GM13976 (cell line): ENCODE measurements at regions of chr22 and their contacts with region 1.

Region 1: DNA sequence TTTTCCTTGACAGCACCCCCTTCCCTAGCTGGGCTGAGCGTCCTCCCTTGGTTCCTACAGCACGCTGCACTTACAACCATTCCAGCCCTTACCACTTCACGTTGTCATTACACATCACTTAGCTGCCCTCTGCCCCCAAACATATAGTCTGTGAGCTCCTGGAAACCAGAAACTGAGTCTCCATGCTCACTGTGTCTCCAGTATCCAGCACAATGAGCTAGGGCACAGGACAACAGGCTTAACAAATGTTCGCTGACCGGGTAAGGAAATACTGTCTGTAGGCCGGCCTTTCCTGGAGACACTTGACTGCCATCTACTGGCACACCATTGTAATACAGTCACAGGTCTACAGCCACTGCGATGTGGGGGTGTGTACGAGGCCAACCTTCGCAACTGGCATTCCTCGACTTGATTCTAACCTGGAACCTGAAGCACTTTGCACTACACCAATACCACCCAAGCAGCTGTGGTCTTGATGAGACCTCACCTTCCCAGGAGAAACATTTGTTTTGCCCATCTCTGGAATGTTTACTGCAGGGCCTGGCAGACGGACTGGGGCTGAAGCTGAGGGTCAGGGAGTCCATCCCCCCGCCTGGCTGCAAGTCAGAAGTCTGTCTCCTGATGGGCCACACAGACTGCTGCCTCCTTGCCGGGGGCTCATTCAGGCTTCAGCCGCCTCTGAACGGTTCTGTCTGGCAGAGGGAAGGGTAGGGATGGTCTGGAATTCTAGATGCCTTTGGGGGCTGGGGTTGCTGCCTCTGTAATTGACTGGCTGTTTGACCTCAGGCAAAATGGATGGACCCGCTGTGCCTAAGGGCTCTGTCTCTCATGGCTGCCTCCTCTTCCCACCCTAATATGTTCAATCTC is 72.0 kb downstream of the SYN3 start:
- DNase-seq: peak; percentile 71
- CTCF ChIP-seq: peak; percentile 68

Region 2: DNA sequence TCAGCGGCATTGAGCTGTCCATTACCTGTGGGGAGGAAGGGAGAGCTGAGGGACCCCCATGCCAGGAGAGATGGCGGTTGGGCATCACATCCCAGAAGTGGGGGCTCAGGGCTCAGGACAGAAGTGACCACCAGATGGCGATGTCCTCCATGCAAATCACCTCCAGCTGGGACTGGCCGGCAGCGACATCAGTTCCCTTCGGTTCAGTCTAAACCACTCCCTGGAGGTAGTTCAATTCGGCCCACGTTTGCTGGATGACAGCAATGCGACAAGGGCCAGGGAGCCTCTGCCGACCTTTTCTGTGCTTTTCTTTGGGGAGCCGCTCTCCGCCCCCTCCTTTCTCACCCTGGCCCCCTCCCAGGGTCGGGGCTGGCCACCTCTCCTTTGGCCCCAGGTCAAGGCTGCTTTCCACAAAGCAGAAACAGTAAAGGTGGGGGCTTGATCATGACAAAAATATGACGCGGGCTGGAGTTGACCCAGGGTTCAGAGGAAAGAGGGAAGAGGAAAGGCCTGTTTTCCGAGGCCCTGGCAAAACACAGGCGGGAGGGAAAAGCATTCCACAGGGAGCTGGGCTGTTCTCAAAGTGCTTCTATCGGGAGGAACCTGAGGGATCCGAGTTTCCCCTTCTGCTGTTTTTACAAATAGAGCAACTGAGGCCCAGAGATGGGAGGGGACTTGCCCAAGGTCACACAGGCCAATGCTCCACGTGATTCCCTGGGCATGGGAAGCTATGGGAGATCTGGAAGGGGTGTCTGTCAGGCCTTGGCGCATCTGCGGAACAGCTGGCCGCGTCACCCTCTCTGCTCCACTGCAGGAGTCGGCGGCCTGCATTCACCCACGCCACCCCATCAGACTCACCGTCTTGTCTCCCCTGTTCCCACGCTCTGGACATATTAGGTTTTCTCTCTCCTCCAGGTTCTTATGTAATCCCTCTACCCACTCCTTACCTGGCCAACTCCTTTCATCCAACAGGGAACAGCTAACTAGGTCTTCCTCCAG is 456.8 kb before region 1 on chr22:
- in situ Hi-C with region 1: loop called (anchors 25 kb)
- DNase-seq: peak; percentile 88
- CTCF ChIP-seq: peak; percentile 72